ENCODE measurements at regions of chr21 and their contacts with region 1.

Region 1: DNA sequence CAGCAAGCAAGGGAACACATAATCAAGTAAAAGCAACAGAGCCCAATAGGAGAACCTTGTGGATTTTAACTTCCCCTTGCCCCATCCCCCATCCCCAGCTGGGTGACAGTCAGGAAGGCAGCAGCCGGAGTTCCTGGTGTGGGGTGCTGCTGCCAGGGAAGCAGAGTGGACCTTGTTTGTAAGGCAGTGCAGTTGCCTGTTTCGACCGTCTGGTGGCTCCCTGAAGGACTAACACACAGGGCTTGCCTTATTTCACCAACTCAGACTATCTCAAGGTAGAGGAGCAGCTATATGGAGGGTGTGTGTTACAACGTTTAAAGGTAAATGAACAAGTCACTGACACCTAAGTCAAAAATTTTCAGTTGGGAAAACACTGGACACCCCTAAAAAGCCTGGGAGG is 6.6 kb downstream of the KRTAP10-8 start:
- DNase-seq: peak in 1 of 2 experiments; percentile 50
- H3K4me3 ChIP-seq: no peak overlapping the region
- H3K27ac ChIP-seq: no peak overlapping the region
- H3K4me1 ChIP-seq: peaks cover 0 to 6% (median 2%) of the 10 kb centered on the region in 4 experiments; a peak in 4 of 7 replicates
- H3K27me3 ChIP-seq: no peaks in the 10 kb centered on the region
- CTCF ChIP-seq: peak; percentile 58 to 69 (median 67)
- EP300 ChIP-seq: no peak
- POLR2A ChIP-seq: no peak
- RAD21 ChIP-seq: peak; percentile 52 to 62; a peak in 3 of 4 replicates

Region 2: DNA sequence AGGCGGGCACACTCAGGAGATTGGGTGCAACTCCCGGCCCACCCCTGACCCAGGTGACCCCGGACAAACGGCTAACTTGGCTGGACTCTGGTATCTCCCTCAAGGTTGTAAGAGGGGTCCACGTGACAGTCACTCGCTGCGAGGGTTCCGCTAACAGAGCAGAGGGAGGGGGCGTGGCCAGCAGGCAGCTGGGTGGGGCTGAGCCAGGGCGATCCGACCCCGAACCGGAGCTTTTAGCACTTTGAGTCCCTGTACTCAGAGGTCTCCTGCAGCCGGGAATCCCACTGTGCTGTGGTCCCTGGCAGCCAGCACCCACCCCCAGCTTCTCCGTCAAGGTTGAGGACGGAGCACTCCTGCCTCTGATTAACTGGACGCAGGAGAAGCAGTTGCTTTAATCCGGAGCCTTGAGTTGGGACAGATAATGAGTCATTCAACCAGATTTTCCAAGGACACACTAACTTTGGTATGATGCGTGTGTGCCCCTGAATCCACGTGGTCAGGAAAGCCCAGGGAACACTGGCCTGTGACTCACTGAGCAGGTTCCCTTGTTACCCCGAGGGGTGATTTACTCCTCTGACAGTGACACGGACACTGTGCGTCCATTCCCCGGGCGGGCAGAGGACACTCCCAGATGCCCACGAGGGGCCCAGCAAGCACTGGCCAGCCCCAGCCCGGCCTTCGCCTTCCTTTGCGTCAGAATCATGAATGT is 248.3 kb before region 1 on chr21:
- CTCF ChIA-PET with region 1: no interaction called
- POLR2A ChIA-PET with region 1: no interaction called
- DNase-seq: peak in 1 of 2 experiments; percentile 77
- H3K4me3 ChIP-seq: peak overlapping the region in 2 of 4 experiments; percentile 4 to 47; a peak in 2 of 8 replicates
- H3K27ac ChIP-seq: no peak overlapping the region
- H3K4me1 ChIP-seq: peaks cover 0 to 12% (median 7%) of the 10 kb centered on the region in 4 experiments; a peak in 6 of 7 replicates
- H3K27me3 ChIP-seq: peaks cover 0 to 20% (median 15%) of the 10 kb centered on the region in 4 experiments; a peak in 6 of 7 replicates
- CTCF ChIP-seq: no peak
- EP300 ChIP-seq: no peak
- POLR2A ChIP-seq: no peak
- RAD21 ChIP-seq: no peak

Region 3: DNA sequence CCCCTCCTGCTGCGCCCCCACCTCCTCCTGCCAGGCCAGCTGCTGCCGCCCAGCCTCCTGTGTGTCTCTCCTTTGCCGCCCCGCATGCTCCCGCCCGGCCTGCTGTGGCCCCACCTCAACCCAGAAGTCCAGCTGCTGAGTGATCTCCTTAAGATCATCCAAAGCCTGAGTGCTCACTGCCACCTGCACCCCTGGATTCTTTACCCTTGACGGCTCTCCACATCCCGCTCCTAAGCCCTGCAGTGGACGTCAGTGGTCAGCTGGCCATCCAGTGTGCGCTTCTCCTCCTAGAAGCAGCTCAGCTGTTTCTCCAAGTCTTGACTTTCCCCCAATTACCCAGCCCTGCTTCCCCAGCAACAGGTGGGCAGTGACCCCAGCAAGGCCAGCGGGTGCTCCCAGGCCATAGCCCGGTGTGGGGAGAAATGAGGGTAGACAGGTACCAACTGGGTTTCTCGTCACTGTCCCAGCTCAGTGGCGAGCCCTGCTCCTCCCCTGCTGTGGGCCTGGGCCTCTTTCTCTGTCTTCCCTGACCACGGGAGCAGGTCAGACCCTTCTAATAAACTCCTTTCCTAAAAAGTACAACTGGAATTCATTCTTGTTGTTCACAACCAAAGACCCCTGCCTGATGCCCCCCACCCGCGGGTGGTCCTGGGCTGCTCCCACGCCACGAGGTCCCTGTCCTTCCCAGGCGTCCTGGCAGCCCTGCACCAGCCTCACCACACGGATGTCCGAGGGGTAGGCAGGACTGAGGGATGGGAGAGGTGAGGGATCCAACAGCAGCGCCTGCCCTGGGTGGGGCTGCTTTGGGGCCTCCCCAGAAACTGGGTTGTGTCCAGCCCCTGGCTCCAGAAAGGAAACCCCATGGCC is 16.7 kb before region 1 on chr21:
- CTCF ChIA-PET with region 1: interaction called, 13 read pairs
- POLR2A ChIA-PET with region 1: no interaction called
- DNase-seq: peak in 1 of 2 experiments; percentile 43
- H3K4me3 ChIP-seq: no peak overlapping the region
- H3K27ac ChIP-seq: no peak overlapping the region
- H3K4me1 ChIP-seq: peaks cover 0 to 6% (median 2%) of the 10 kb centered on the region in 4 experiments; a peak in 4 of 7 replicates
- H3K27me3 ChIP-seq: no peaks in the 10 kb centered on the region
- CTCF ChIP-seq: no peak
- EP300 ChIP-seq: no peak
- POLR2A ChIP-seq: no peak
- RAD21 ChIP-seq: no peak

Measured in H1 (cell line).